Cardiac septum (tissue), 1 donor: ENCODE measurements at regions of chr1 and their contacts with region 1.

Region 1: GRCh38 chr1:193417945-193418744 is 231.7 kb upstream of the B3GALT2 start:
- DNase-seq: no peak

Region 2: GRCh38 chr1:192516776-192517297 is 901.3 kb before region 1 on chr1:
- intact Hi-C with region 1: no loop called
- DNase-seq: no peak

Region 3: GRCh38 chr1:193498088-193498655 is 80.0 kb after region 1 on chr1:
- intact Hi-C with region 1: no loop called
- DNase-seq: no peak

Region 4: GRCh38 chr1:193539731-193540459 is 121.8 kb after region 1 on chr1:
- intact Hi-C with region 1: loop called (anchors 10 kb)
- DNase-seq: no peak

Region 5: GRCh38 chr1:194295685-194296084 is 877.5 kb after region 1 on chr1:
- intact Hi-C with region 1: loop called (anchors 10 kb)
- DNase-seq: no peak